ENCODE measurements at regions of chr7 and their contacts with region 1.

Region 1: DNA sequence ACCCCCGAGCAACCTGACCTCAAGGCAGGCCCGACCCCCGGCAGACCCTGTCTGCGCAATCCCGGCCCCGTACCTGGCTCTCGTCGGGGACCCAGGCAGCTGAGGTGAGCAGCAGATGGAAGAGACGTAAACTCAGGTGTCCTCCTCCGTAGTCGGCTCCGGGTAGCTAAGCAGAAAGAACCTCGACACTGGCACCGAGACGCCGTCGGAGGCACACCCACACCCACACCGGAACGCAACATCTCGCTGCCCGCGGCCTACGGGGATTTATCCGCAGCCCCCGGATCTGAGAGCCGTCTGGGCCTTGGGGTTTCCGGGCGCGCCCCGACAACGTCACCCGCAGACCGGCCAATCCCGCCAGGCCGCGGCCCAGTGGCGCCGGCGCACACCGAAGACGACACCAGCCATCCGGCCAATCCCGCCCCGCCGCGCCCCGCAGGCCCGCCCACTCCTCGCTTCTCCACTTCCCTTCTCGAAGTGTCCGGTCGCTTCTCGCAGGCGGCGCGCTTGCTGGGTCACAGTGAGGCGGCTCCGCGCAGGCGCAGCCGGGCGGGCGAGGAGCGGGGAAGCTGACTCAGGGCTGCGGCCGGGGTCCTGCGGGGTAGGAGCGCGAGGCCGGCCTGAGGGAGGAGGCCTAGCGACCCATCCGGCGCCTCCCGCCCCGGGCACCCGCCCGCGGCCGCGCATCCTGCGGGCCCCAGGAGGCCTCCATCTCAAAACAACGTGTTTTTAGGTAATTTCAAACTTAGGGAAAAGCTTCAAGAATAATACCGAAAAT is at the start of gene ZFAND2A:
- DNase-seq: peak; percentile 97 to 98 (median 98)
- H3K4me3 ChIP-seq: peak within 1 kb of the TSS; percentile 76 to 100 (median 98)
- H3K27ac ChIP-seq: peak within 1 kb of the TSS; percentile 95 to 97
- H3K4me1 ChIP-seq: peaks cover 4 to 25% (median 20%) of the 10 kb centered on the region in 4 experiments
- H3K27me3 ChIP-seq: no peaks in the 10 kb centered on the region

Region 2: DNA sequence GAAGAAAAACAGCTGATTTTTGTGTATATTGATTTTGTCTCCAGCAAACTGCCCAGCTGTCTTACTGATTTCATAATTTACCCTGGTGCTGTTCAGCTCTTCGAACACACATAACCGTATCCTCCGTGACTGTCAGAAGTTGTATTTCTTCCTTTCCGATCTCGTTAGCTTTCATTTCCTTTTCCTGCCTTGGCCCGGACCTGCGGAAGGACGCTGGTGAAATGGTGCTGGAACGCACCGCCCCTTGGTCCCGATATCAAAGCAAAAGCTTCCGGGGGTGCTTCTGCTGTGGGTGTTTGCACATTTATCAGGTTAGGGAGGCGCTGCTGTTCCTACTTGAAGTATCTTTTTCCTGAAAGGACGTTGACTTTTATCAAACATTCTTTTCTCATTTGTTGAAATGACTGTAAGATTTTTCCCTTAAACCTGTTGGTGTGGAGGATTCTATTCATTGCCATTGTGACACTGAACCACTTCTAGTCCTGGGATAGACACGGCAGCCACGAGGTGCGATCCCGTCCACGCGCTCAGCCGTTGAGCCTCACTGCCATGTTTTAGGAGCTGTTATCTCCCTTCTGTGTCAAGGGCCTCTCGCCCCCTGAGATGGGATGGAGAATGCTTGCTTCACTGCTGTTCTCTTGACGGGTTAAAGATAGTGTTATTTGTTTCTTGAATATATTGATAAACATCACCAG is 797.5 kb before region 1 on chr7:
- CTCF ChIA-PET with region 1: no interaction called
- POLR2A ChIA-PET with region 1: no interaction called
- DNase-seq: peak; percentile 45 to 64 (median 49)
- H3K4me3 ChIP-seq: peak overlapping the region in 6 of 7 experiments; percentile 39 to 61 (median 45)
- H3K27ac ChIP-seq: no peak overlapping the region
- H3K4me1 ChIP-seq: peaks cover 19 to 71% (median 65%) of the 10 kb centered on the region in 4 experiments
- H3K27me3 ChIP-seq: peaks cover 0 to 3% (median 0%) of the 10 kb centered on the region in 5 experiments

Region 3: GRCh38 chr7:1175967-1176851 is 16.1 kb after region 1 on chr7:
- CTCF ChIA-PET with region 1: interaction called, 12 read pairs
- POLR2A ChIA-PET with region 1: no interaction called
- DNase-seq: peak; percentile 38 to 64 (median 58)
- H3K4me3 ChIP-seq: peak overlapping the region in 3 of 7 experiments; percentile 44 to 65 (median 55)
- H3K27ac ChIP-seq: no peak overlapping the region
- H3K4me1 ChIP-seq: peaks cover 0 to 11% (median 8%) of the 10 kb centered on the region in 4 experiments
- H3K27me3 ChIP-seq: no peaks in the 10 kb centered on the region

Region 4: DNA sequence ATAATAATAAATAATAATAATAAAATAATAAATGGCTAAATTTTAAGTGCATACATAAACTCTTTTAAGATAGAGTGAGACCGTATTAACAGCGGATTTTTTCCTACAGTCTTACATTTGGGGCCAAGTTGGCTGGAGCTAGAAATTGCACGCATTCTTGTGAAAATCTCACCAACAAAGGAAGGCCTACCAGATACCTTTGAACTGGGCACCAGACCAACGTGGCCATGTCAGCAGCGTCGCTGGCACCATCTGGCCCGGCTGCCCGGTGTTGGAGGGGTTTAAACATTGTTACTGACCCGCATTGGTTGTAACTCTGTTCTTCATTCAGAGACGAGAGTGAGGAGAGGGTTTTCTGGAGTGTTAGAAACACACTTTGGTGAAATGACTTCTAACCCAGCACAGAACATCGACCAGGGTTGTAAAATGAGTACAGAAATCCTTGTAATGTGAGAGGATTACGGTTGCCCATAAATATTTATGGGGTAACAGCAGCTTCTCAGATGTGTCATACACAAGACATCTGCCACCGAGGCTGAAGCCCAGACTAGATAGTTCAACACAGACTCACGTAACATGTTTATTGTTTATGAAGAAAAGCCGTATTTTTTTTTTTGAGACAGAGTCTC is 38.0 kb after region 1 on chr7:
- CTCF ChIA-PET with region 1: no interaction called
- POLR2A ChIA-PET with region 1: no interaction called
- DNase-seq: no peak
- H3K4me3 ChIP-seq: no peak overlapping the region
- H3K27ac ChIP-seq: no peak overlapping the region
- H3K4me1 ChIP-seq: peaks cover 0 to 8% (median 0%) of the 10 kb centered on the region in 4 experiments
- H3K27me3 ChIP-seq: peaks cover 2 to 36% (median 5%) of the 10 kb centered on the region in 5 experiments

Measured in common myeloid progenitor, CD34-positive (primary cell).